ENCODE measurements at regions of chr10 and their contacts with region 1.

Region 1: DNA sequence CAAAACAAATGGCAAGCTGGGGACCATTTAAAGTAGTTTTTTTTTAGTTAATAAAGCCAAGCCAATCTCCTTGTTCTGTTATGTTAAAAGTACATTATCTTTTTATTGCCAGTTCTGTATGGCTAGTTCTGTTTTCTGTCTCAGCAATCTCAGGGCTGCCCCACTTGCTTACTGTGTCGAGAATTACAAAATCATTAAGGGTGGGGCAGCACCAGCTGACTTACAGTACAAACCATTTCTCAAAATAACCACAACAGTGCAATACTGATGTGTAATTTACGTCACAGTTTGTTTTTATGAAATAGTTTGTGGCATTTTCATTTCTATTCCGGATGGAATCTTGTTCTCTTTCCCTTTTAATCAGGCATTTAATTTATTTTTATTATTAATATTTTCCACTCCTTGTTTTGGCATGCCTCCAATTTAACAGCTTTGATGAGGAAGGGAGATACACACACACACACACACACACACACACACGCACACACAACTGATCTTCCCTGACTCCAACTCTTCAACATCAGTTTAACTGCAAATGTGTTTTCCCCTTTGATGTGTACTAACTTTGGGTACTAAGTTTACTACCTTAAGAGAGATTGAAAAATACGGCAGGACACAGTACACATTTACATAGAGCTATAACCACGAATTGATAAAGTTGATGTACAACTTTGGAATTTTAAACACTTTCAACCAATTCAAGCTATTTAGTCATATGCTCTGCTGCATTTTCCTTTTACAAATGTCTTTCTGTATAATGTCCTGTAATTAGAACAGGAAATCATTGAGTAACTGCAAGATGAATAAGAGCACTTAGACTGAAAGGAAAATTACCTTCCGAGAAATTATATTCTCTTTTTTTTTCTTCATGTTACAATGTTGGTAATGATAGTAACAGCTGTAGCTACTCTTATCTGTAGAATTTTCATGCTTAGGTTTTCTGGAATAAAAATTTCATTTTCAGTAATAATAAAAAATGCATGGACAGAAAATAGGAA is 91.5 kb downstream of the ARID5B start:
- DNase-seq: peak; percentile 50
- ATAC-seq: no peak
- H3K4me3 ChIP-seq: no peak overlapping the region
- H3K27ac ChIP-seq: no peak overlapping the region
- H3K4me1 ChIP-seq: no peaks in the 10 kb centered on the region
- H3K27me3 ChIP-seq: no peaks in the 10 kb centered on the region
- CTCF ChIP-seq: no peak

Region 2: DNA sequence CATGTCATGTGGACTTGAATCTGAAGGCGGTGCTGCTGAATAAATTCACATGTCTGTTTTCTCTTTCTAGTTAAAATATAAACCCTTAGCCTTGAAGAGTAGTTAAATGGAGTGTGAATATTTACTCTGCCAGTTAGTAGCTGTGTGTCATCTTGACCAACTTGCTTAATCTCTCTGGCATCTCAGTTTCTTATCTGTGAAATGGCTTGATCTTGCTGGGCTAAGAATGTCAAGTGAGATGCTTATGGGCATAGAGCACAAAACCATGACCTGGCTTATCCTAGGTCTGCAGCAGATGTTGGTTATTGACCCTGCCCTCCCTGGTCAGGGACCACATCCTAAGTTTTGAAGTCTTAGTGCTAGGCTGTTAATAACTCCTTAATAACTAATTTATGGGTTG is 74.8 kb before region 1 on chr10:
- CTCF ChIA-PET with region 1: no interaction called
- POLR2A ChIA-PET with region 1: no interaction called
- intact Hi-C with region 1: no loop called
- DNase-seq: no peak
- ATAC-seq: peak; percentile 39
- H3K4me3 ChIP-seq: no peak overlapping the region
- H3K27ac ChIP-seq: no peak overlapping the region
- H3K4me1 ChIP-seq: peaks cover 3% of the 10 kb centered on the region
- H3K27me3 ChIP-seq: no peaks in the 10 kb centered on the region
- CTCF ChIP-seq: no peak

Region 3: DNA sequence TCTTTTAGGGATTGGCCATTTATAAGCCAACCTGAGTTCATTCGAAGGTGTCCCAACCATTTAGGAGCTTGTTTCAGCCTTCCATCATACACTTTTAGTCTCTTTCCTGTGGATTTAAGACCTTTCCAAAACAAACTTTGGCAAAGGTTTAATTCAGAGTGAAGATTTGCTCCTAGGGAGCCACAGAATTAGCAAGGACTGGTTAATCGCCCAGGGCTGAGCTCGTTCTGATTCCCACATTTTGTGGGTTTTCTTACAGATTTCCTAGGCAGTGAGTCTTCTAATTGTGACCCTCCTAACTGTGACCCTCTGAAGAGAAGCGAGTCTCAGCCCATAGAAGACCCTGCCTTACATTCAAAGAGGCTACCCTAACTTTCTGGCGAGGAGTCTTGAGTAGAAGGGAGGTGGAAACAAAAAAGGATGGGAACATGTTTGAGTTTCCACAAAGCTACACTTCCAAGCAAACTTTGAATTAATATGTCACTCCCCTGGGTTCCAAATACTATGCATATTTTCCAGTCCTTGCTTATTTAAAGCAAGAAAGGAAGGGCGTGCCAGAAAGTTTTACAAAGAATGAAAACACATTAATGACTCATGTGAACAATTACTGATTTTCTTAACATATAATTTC is 26.8 kb after region 1 on chr10:
- CTCF ChIA-PET with region 1: no interaction called
- POLR2A ChIA-PET with region 1: no interaction called
- intact Hi-C with region 1: loop called (anchors 2 kb)
- DNase-seq: no peak
- ATAC-seq: no peak
- H3K4me3 ChIP-seq: no peak overlapping the region
- H3K27ac ChIP-seq: no peak overlapping the region
- H3K4me1 ChIP-seq: peaks cover 26% of the 10 kb centered on the region
- H3K27me3 ChIP-seq: no peaks in the 10 kb centered on the region
- CTCF ChIP-seq: no peak

Measured in PC-3 (cell line).